ENCODE measurements at regions of chr12 and their contacts with region 1.

Region 1: GRCh38 chr12:123990511-123990910 is 17.5 kb downstream of the ZNF664 start:
- DNase-seq: peak in 1 of 5 donors; percentile 28
- ATAC-seq: peak in 2 of 4 donors; percentile 26 to 52
- H3K4me3 ChIP-seq: no peak overlapping the region
- H3K27ac ChIP-seq: peak overlapping the region in 10 of 12 donors; percentile 2 to 62 (median 42)
- H3K4me1 ChIP-seq: peaks cover 7 to 82% (median 45%) of the 10 kb centered on the region in 12 donors
- H3K27me3 ChIP-seq: no peaks in the 10 kb centered on the region
- CTCF ChIP-seq: no peak
- POLR2A ChIP-seq: no peak

Region 2: GRCh38 chr12:124026755-124027745 is 36.5 kb after region 1 on chr12:
- intact Hi-C with region 1: loop called in 3 of 10 experiments (anchors 5 kb)
- DNase-seq: peak in 2 of 5 donors; percentile 40 to 54
- ATAC-seq: peak; percentile 59 to 88 (median 78)
- H3K4me3 ChIP-seq: no peak overlapping the region
- H3K27ac ChIP-seq: peak overlapping the region in 10 of 12 donors; percentile 15 to 79 (median 54)
- H3K4me1 ChIP-seq: peaks cover 0 to 44% (median 24%) of the 10 kb centered on the region in 12 donors
- H3K27me3 ChIP-seq: no peaks in the 10 kb centered on the region
- CTCF ChIP-seq: no peak
- POLR2A ChIP-seq: no peak